Activated CD4-positive, alpha-beta T cell treated with anti-CD3 and anti-CD28 coated beads for 36 hours (primary cell): ENCODE measurements at regions of chr10 and their contacts with region 1.

Region 1: GRCh38 chr10:103888113-103888841 is 29.7 kb downstream of the STN1 start:
- DNase-seq: peak; percentile 57
- ATAC-seq: peak; percentile 82
- H3K4me3 Mint-ChIP-seq: no peak overlapping the region
- H3K27ac Mint-ChIP-seq: peak overlapping the region; percentile 83
- H3K4me1 Mint-ChIP-seq: peaks cover 35% of the 10 kb centered on the region
- H3K27me3 Mint-ChIP-seq: no peaks in the 10 kb centered on the region

Region 2: GRCh38 chr10:103901299-103901698 is 13.0 kb after region 1 on chr10:
- CTCF ChIA-PET with region 1: interaction called, 14 read pairs
- POLR2A ChIA-PET with region 1: no interaction called
- intact Hi-C with region 1: no loop called
- DNase-seq: no peak
- ATAC-seq: peak; percentile 83
- H3K4me3 Mint-ChIP-seq: no peak overlapping the region
- H3K27ac Mint-ChIP-seq: no peak overlapping the region
- H3K4me1 Mint-ChIP-seq: peaks cover 34% of the 10 kb centered on the region
- H3K27me3 Mint-ChIP-seq: no peaks in the 10 kb centered on the region

Region 3: DNA sequence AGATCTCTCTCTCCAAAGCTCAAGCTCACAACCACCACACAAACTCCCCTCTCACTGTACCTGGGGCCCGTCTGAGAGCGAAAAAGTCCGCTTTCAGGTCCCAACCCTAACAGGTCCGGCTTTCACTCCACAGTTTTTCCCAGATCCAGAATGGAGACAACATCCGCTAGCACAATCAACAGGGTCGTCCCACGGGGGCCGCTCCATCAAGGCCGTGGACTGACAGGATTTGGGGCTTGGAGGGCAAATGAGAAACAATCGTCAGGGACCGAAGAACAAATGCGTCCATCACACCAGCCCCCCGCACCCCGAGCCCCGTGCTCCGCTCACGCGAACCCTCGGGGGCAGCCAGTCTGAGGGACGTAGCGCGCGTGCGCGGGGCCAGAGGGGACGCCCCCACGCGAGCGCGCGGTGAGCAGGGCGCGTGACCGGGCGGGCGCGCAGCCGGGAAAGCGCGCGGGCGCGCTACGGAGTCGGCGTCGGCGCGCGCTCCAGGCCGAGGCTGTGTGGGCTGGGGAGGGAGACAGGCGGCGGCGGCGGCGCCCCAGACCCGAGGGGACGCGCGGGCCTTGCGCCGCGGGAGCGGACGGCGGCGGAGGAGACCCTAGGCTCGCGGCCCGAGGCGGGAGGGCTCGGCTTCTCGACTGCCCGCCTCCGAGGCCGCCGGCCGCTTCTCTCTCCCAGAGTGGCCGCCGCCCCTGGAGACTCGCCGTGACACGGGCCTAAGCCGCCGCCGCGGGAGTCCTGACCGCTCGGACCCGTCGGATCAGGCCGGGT is 78.6 kb after region 1 on chr10 and contains the start of gene SLK:
- CTCF ChIA-PET with region 1: interaction called, 7 read pairs
- POLR2A ChIA-PET with region 1: no interaction called
- intact Hi-C with region 1: loop called (anchors 1 to 5 kb)
- DNase-seq: peak; percentile 90
- ATAC-seq: peak; percentile 82
- H3K4me3 Mint-ChIP-seq: peak within 1 kb of the TSS; percentile 97
- H3K27ac Mint-ChIP-seq: peak within 1 kb of the TSS; percentile 95
- H3K4me1 Mint-ChIP-seq: peaks cover 30% of the 10 kb centered on the region
- H3K27me3 Mint-ChIP-seq: no peaks in the 10 kb centered on the region
- total RNA-seq, gene SLK: 20.2 to 32.5 TPM

Region 4: GRCh38 chr10:104005172-104005863 is 117.0 kb after region 1 on chr10:
- CTCF ChIA-PET with region 1: interaction called, 11 read pairs
- POLR2A ChIA-PET with region 1: no interaction called
- intact Hi-C with region 1: no loop called
- DNase-seq: no peak
- ATAC-seq: peak; percentile 63
- H3K4me3 Mint-ChIP-seq: no peak overlapping the region
- H3K27ac Mint-ChIP-seq: peak overlapping the region; percentile 43
- H3K4me1 Mint-ChIP-seq: peaks cover 8% of the 10 kb centered on the region
- H3K27me3 Mint-ChIP-seq: no peaks in the 10 kb centered on the region

Region 5: DNA sequence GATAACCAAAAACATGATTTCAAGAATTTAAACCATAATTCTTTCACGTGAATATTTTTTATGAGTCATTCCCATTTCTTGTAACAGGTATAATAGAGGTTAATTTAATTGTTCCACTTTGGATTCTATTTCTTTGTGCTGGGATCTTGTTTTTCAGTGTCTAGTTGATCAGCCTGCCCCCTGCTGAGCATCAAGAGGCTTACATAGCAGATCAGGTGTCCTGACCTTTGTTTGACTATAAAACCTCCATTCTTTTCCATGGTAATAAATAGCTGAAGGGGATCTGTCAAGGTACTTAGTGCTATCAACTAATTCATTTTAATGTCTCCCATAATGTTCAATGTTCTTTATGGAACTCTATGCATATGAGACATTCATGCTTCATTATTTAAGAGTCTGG is 192.5 kb after region 1 on chr10:
- CTCF ChIA-PET with region 1: interaction called, 10 read pairs
- POLR2A ChIA-PET with region 1: no interaction called
- intact Hi-C with region 1: loop called (anchors 1 to 5 kb)
- DNase-seq: peak; percentile 29
- ATAC-seq: peak; percentile 47
- H3K4me3 Mint-ChIP-seq: no peak overlapping the region
- H3K27ac Mint-ChIP-seq: no peak overlapping the region
- H3K4me1 Mint-ChIP-seq: no peaks in the 10 kb centered on the region
- H3K27me3 Mint-ChIP-seq: no peaks in the 10 kb centered on the region